PC-9 (cell line): ENCODE measurements at regions of chr6 and their contacts with region 1.

Region 1: GRCh38 chr6:37774028-37774680 is 45.4 kb upstream of the ZFAND3 start:
- DNase-seq: no peak
- H3K4me3 ChIP-seq: no peak overlapping the region
- H3K27ac ChIP-seq: no peak overlapping the region
- H3K4me1 ChIP-seq: no peaks in the 10 kb centered on the region
- H3K27me3 ChIP-seq: no peaks in the 10 kb centered on the region
- CTCF ChIP-seq: no peak

Region 2: GRCh38 chr6:38542031-38542430 is 767.9 kb after region 1 on chr6:
- CTCF ChIA-PET with region 1: interaction called, 10 read pairs
- POLR2A ChIA-PET with region 1: no interaction called
- intact Hi-C with region 1: no loop called
- DNase-seq: no peak
- H3K4me3 ChIP-seq: no peak overlapping the region
- H3K27ac ChIP-seq: no peak overlapping the region
- H3K4me1 ChIP-seq: no peaks in the 10 kb centered on the region
- H3K27me3 ChIP-seq: no peaks in the 10 kb centered on the region
- CTCF ChIP-seq: no peak